Activated CD8-positive, alpha-beta T cell treated with anti-CD3 and anti-CD28 coated beads for 36 hours (primary cell): ENCODE measurements at regions of chr2 and their contacts with region 1.

Region 1: DNA sequence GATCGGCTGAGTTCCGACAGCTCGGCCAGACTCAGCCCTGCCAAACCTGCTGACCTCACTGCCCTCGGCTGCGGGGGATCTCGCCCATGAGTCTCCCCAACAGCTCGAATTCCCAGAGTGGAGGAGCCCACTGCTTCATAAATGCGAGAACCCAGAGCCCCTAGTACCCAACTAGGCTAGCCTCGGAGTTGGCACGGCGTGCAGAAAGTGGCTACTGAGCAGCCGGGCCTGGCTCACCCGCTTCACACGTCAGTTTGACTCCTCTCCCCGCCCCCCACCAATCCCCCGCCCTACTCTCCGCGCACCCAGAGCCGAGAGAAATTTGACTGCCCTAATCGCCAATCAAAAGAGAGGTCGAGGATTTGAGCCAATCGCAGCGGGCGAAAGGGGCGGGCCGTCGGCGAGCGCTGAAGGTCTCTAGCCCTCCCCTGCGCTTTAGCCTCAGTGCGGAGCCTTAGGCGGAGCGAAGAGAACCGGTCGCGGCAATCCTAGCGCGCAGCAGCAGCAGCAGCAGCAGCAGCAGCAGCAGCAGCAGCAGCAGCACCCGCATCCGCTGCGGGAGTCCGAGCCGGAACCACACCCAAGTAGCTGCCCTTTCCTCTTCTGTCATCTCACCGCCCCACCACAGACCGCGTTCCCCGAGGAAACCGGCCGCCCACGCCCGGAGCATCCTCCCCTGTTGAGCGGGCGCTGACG is at the start of gene GLS:
- DNase-seq: peak; percentile 97
- ATAC-seq: peak; percentile 81
- H3K4me3 Mint-ChIP-seq: peak within 1 kb of the TSS; percentile 94
- H3K27ac Mint-ChIP-seq: peak within 1 kb of the TSS; percentile 99
- H3K4me1 Mint-ChIP-seq: peaks cover 36% of the 10 kb centered on the region
- H3K27me3 Mint-ChIP-seq: no peaks in the 10 kb centered on the region
- CTCF ChIP-seq: no peak
- total RNA-seq, gene GLS: 218 to 227 TPM

Region 2: GRCh38 chr2:190551928-190552327 is 328.6 kb before region 1 on chr2:
- CTCF ChIA-PET with region 1: no interaction called
- POLR2A ChIA-PET with region 1: no interaction called
- intact Hi-C with region 1: no loop called
- DNase-seq: peak; percentile 14
- ATAC-seq: peak; percentile 79
- H3K4me3 Mint-ChIP-seq: no peak overlapping the region
- H3K27ac Mint-ChIP-seq: no peak overlapping the region
- H3K4me1 Mint-ChIP-seq: peaks cover 13% of the 10 kb centered on the region
- H3K27me3 Mint-ChIP-seq: no peaks in the 10 kb centered on the region
- CTCF ChIP-seq: no peak

Region 3: DNA sequence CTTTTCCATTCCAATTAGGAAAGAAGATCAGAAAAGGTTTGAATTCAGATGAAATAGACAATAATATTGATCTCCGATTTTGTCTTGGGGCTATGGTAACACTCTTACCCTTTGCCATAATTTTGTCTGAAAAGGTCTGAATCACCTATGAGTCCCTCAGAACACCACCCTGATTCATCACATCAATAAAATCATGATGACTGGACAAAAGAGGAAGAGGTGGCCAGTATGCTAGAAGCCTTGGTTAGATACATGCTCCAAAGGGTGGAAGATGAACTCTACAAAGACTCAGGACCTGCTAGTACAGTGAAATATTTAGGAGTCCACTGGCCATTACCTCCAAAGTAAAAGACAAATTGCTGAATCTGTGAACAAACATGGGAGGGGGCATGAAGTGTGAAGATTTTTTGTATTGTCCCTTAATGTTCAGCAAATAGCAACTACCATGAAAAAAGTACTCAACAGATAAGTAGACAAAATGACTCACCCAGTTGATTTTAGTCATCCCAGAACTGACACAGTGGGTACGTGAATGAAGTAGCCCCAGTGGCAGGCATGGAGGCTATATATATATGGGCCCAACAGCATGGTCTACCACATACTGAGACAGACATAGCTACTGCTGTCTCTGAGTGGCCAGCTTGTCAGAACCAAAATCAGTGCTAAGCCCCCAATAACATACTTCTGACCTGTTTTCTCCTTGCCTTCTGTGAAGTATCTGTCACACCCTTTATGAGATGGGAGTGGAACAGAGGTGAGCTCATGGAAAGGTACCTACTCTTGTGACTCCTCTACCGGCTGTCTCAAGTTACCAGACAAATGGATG is 36.4 kb before region 1 on chr2:
- CTCF ChIA-PET with region 1: interaction called, 3 read pairs
- POLR2A ChIA-PET with region 1: interaction called, 16 read pairs
- intact Hi-C with region 1: no loop called
- DNase-seq: peak; percentile 77
- ATAC-seq: peak; percentile 92
- H3K4me3 Mint-ChIP-seq: peak overlapping the region; percentile 25
- H3K27ac Mint-ChIP-seq: peak overlapping the region; percentile 92
- H3K4me1 Mint-ChIP-seq: peaks cover 31% of the 10 kb centered on the region
- H3K27me3 Mint-ChIP-seq: no peaks in the 10 kb centered on the region
- CTCF ChIP-seq: no peak

Region 4: DNA sequence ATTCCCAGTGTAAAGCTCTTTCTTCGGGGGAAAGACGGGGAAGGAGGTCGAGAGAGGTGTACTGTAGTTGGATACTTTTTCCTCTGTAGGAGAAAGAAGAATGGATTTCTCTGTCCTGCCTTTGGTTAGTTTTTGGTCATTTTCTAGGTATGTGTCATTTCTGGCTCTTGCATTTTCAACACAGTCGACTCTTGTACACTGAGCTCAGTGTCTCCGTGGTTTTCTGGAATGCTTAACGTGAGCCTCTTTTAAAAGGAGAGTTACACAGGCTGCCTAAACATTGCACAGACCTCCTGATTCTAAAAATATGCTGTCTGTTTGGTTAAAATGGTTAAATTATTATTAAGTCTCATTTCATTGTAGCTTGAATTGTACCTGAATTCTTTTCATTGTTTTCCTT is 21.7 kb before region 1 on chr2:
- CTCF ChIA-PET with region 1: interaction called, 5 read pairs
- POLR2A ChIA-PET with region 1: interaction called, 27 read pairs
- intact Hi-C with region 1: no loop called
- DNase-seq: no peak
- ATAC-seq: no peak
- H3K4me3 Mint-ChIP-seq: no peak overlapping the region
- H3K27ac Mint-ChIP-seq: no peak overlapping the region
- H3K4me1 Mint-ChIP-seq: peaks cover 24% of the 10 kb centered on the region
- H3K27me3 Mint-ChIP-seq: no peaks in the 10 kb centered on the region
- CTCF ChIP-seq: no peak

Region 5: GRCh38 chr2:190893157-190893556 is 12.6 kb after region 1 on chr2:
- CTCF ChIA-PET with region 1: interaction called, 7 read pairs
- POLR2A ChIA-PET with region 1: interaction called, 34 read pairs
- intact Hi-C with region 1: no loop called
- DNase-seq: no peak
- ATAC-seq: no peak
- H3K4me3 Mint-ChIP-seq: no peak overlapping the region
- H3K27ac Mint-ChIP-seq: no peak overlapping the region
- H3K4me1 Mint-ChIP-seq: peaks cover 67% of the 10 kb centered on the region
- H3K27me3 Mint-ChIP-seq: no peaks in the 10 kb centered on the region
- CTCF ChIP-seq: no peak

Region 6: GRCh38 chr2:190911813-190912212 is 31.3 kb after region 1 on chr2:
- CTCF ChIA-PET with region 1: no interaction called
- POLR2A ChIA-PET with region 1: interaction called, 8 read pairs
- intact Hi-C with region 1: loop called (anchors 1 kb)
- DNase-seq: peak; percentile 18
- ATAC-seq: peak; percentile 91
- H3K4me3 Mint-ChIP-seq: no peak overlapping the region
- H3K27ac Mint-ChIP-seq: no peak overlapping the region
- H3K4me1 Mint-ChIP-seq: peaks cover 56% of the 10 kb centered on the region
- H3K27me3 Mint-ChIP-seq: no peaks in the 10 kb centered on the region
- CTCF ChIP-seq: no peak

Region 7: DNA sequence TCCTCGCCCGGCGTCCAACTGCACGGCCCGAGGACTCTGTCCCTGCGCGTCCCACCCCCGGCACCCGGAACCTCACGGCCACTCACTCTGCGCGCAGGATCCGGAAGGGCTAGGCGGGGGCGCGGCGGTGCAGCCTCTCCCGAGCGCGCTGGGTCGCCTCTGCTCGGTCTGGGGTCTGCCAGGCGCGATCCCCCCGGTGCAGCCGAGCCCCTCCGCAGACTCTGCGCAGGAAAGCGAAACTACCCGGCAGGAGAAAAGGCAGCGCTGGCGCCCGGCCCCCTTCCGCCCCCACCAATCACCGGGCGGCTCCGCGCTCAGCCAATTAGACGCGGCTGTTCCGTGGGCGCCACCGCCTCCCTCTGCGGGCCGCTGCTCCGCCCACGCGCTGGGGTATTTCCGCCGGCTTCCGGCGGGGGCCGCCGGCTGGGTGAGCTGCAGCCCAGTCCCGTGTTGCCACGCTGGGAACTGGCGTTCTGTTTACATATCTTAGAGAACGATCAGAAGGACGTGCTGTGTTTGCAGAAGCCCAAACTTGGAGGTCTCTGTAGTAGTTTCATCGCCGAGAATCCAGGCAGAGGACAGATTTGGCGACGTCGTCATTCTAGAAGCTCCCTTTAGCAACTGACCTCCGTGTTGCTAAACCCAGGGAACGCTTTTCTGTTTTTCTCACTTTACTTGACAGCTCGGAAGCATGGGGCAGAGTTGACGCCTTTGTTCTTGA is 133.6 kb after region 1 on chr2 and contains the start of gene STAT1:
- CTCF ChIA-PET with region 1: no interaction called
- POLR2A ChIA-PET with region 1: interaction called, 32 read pairs
- intact Hi-C with region 1: loop called (anchors 5 kb)
- DNase-seq: peak; percentile 95
- ATAC-seq: peak; percentile 84
- H3K4me3 Mint-ChIP-seq: no peak within 1 kb of the TSS
- H3K27ac Mint-ChIP-seq: no peak within 1 kb of the TSS
- H3K4me1 Mint-ChIP-seq: peaks cover 36% of the 10 kb centered on the region
- H3K27me3 Mint-ChIP-seq: no peaks in the 10 kb centered on the region
- CTCF ChIP-seq: no peak
- total RNA-seq, gene STAT1: 293 to 311 TPM